Endothelial cell of umbilical vein (primary cell): ENCODE measurements at regions of chr1 and their contacts with region 1.

Region 1: DNA sequence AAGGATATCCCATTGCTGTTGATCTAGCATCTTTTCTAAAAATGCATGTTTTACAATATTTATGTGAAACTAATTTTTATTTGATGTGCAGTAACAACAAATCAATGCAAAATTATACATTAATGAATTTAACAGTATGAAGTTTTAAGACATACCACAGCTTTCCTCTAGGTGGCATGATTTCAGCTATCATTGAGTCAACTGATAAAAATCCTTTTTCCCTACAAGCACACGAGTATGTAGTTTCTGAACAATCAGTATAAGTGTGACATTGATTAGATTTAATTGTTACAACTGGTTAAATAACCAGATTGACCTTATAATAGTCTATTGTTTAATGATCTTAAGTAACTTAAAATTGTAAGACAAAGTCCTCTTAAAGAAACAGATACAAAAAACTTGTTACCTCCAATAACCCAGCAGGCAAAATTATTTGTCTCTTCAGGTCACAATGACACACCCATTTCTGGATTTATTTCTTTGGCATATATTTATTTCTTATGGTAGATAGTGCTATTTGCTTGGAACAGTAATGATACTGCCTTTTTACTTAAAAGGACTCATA is 5.8 kb upstream of the TGFB2 start:
- DNase-seq: peak; percentile 74
- H3K4me3 ChIP-seq: no peak overlapping the region
- H3K27ac ChIP-seq: no peak overlapping the region
- H3K4me1 ChIP-seq: no peaks in the 10 kb centered on the region
- H3K27me3 ChIP-seq: no peaks in the 10 kb centered on the region
- CTCF ChIP-seq: peak; percentile 41 to 48
- POLR2A ChIP-seq: no peak

Region 2: DNA sequence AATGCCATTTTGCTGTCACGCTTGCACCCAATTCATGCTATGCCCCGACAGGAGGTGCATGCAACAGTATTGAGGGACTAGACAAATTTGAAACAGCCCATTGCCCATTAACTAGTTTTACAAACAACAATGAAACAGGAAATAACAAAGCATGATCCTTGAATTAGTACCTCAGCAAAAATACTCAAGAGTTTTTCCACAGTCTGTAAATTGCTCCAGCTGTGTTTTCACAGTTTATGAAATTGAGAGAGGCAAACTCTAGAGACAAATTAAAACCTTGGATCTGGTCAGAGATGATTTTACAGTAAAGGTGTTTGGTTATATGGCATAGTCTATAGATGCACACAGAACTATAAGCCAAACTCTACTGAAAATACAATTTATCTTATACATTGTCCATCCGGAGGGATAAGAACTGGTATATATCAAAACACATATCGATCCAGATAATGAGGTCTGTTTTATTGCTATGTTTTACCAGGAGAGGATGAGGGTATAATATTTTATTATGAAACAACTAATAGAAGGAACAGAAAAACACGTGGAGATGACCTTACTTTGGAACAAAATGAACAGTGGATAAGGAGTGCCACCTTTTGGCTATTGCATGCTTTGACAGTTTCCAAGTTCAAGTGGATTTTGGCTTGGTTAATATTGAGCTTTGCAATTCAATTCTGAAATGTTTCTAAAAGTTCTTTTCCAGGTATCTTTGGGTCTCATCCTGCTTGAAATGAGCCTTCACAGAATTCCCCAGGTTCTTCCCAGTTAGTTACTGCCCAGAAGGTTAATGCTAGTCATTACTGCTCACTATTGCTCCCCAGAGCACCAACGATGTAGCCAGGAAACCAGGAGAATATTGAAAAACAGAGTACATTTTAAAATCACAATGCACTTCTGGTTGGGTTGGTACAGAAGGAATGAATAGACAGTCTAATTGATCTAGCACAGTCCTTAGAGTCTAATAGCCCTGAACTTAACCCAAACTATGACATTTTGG is 1227.9 kb after region 1 on chr1:
- CTCF ChIA-PET with region 1: interaction called, 14 read pairs
- POLR2A ChIA-PET with region 1: no interaction called
- dilution Hi-C with region 1: no loop called
- intact Hi-C with region 1: no loop called
- DNase-seq: peak; percentile 45
- H3K4me3 ChIP-seq: no peak overlapping the region
- H3K27ac ChIP-seq: no peak overlapping the region
- H3K4me1 ChIP-seq: no peaks in the 10 kb centered on the region
- H3K27me3 ChIP-seq: peaks cover 0 to 3% of the 10 kb centered on the region in 2 experiments
- CTCF ChIP-seq: peak; percentile 19 to 32
- POLR2A ChIP-seq: no peak